Mammary epithelial cell (primary cell): ENCODE measurements at regions of chr6 and their contacts with region 1.

Region 1: GRCh38 chr6:122869437-122870024 is 80.5 kb downstream of the SMPDL3A start:
- DNase-seq: peak; percentile 49
- H3K4me3 ChIP-seq: no peak overlapping the region
- H3K27ac ChIP-seq: no peak overlapping the region
- H3K4me1 ChIP-seq: no peaks in the 10 kb centered on the region
- H3K27me3 ChIP-seq: no peaks in the 10 kb centered on the region
- CTCF ChIP-seq: peak; percentile 86 to 88

Region 2: DNA sequence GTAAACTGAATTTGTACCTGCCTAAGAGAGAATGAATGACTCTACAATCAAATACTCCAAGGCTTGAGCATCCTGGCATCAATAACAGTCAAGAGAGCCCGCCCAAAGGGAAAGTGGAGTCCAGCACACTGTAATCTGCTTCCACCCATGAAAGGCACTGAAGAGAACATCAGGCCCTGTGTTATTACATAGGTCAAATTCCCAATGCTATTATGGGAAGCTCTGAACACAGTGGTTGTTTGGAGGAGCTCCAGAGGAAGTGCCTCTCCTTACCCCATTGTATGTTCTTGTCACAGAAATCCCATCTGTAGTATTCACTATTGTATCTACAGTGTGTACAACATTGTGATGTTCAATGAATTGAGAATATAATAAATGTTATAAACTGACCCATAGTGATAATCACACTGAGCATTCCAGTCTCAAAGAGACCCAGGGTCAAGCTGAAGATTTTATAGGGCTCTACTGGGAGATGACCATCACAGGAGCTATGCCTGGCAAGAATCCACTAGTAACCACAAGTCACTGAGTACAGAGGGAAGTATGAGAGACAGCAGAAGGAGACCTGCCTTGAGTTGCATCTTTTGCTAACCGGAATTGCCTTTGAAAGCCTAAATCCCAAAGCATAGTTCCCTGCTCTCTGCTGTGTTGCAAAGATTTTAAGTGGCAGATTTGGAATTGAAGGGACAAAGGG is 987.4 kb before region 1 on chr6:
- CTCF ChIA-PET with region 1: no interaction called
- dilution Hi-C with region 1: no loop called
- in situ Hi-C with region 1: no loop called
- intact Hi-C with region 1: no loop called
- DNase-seq: peak; percentile 46
- H3K4me3 ChIP-seq: no peak overlapping the region
- H3K27ac ChIP-seq: no peak overlapping the region
- H3K4me1 ChIP-seq: peaks cover 4% of the 10 kb centered on the region
- H3K27me3 ChIP-seq: no peaks in the 10 kb centered on the region
- CTCF ChIP-seq: no peak

Region 3: GRCh38 chr6:122947355-122947754 is 77.8 kb after region 1 on chr6:
- CTCF ChIA-PET with region 1: interaction called, 6 read pairs
- dilution Hi-C with region 1: no loop called
- in situ Hi-C with region 1: no loop called
- intact Hi-C with region 1: loop called (anchors 1 kb)
- DNase-seq: peak; percentile 7
- H3K4me3 ChIP-seq: no peak overlapping the region
- H3K27ac ChIP-seq: no peak overlapping the region
- H3K4me1 ChIP-seq: no peaks in the 10 kb centered on the region
- H3K27me3 ChIP-seq: no peaks in the 10 kb centered on the region
- CTCF ChIP-seq: peak; percentile 45 to 75

Region 4: GRCh38 chr6:122969999-122970533 is 100.5 kb after region 1 on chr6:
- CTCF ChIA-PET with region 1: no interaction called
- dilution Hi-C with region 1: no loop called
- in situ Hi-C with region 1: no loop called
- intact Hi-C with region 1: no loop called
- DNase-seq: no peak
- H3K4me3 ChIP-seq: no peak overlapping the region
- H3K27ac ChIP-seq: no peak overlapping the region
- H3K4me1 ChIP-seq: no peaks in the 10 kb centered on the region
- H3K27me3 ChIP-seq: no peaks in the 10 kb centered on the region
- CTCF ChIP-seq: no peak

Region 5: DNA sequence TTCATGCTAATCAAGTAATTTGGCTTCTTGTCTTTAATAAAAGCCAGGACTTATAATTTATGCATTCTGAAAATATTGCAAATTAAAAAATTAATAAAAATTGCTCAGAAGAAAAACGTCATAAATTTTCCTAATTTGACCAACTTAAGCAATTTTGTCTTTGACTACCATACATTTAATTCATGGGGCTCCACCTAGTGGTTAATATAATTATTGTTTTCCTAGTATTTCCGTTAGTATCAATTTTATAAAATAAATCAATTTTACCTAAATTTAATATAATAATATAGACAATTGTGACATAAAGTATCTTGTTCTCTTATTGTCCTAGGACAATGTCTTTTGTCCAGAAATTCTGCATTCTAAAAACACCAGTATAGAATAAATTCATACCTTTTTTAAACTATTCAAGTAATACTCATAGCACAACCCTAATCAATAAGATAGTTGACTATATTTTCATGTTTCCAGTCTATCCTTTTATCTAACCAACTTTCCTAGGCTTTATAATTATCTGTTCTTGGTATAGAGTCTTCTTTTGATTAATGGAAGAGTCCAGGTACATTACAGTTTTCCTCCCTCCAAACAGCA is 447.3 kb after region 1 on chr6:
- CTCF ChIA-PET with region 1: no interaction called
- dilution Hi-C with region 1: loop called (anchors 25 kb)
- in situ Hi-C with region 1: loop called (anchors 10 to 25 kb)
- intact Hi-C with region 1: loop called (anchors 1 kb)
- DNase-seq: no peak
- H3K4me3 ChIP-seq: no peak overlapping the region
- H3K27ac ChIP-seq: no peak overlapping the region
- H3K4me1 ChIP-seq: no peaks in the 10 kb centered on the region
- H3K27me3 ChIP-seq: no peaks in the 10 kb centered on the region
- CTCF ChIP-seq: peak; percentile 35 to 45

Region 6: DNA sequence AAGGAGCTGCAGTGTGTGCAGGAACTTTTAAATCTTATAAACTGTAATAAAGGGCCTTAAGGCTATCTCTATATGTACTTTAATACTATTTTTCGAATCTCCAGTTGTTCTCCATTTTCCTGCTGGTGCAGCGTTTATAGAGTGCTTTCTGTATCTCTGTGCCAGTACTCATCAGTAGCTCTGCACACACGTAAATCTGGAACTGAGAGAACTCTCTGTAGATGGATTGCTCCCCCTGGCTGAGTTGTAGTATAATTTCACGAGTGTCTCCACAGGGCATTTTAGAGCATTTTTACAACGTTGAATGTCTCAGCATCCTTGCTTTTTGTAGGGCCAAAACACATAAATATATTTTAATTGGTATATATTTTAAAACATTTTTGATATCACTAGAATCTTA is 510.7 kb after region 1 on chr6:
- CTCF ChIA-PET with region 1: interaction called, 7 read pairs
- dilution Hi-C with region 1: no loop called
- in situ Hi-C with region 1: no loop called
- intact Hi-C with region 1: loop called (anchors 1 kb)
- DNase-seq: peak; percentile 14
- H3K4me3 ChIP-seq: no peak overlapping the region
- H3K27ac ChIP-seq: no peak overlapping the region
- H3K4me1 ChIP-seq: no peaks in the 10 kb centered on the region
- H3K27me3 ChIP-seq: peaks cover 4% of the 10 kb centered on the region
- CTCF ChIP-seq: peak; percentile 24 to 43

Region 7: DNA sequence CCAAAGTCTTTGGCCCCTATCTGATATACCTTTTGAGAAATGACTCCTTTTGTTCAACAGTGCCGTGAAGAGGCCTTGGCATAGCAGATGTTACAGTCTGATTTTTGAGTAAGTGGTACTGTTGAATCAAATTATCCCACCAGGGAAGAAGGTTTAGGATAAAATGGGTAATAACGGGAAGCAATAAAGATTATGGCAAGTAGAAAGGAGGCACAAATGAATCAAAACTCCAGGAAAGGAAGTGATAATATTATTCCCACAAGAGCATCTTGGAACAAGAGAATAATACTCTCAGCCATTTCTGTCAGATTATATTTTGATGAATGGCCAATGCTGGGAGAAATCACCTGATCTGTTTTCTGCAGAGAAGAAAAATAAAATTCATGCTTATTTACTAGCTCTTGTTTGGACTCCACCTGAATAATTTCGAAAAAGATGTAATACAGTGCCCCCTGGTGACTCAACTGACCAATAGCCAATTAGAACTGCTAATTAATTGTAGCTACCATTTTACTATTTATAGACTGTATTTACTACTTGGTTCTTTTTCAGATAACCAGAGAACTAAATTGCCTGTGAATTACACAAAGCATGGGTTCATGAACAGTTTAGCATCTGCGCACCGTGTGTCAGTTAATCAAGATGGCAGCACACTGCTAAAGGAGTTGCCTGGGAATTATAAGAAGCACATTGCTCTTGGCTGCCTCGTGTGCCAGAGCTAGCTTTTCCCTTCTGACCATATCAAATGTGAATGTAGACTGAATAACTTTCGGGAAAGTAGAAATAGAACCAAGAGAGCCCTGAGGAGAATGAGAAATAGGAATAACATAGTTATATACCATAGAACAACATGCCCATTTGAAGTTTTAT is 845.7 kb after region 1 on chr6:
- CTCF ChIA-PET with region 1: interaction called, 5 read pairs
- dilution Hi-C with region 1: no loop called
- in situ Hi-C with region 1: no loop called
- intact Hi-C with region 1: loop called (anchors 2 kb)
- DNase-seq: peak; percentile 5
- H3K4me3 ChIP-seq: no peak overlapping the region
- H3K27ac ChIP-seq: no peak overlapping the region
- H3K4me1 ChIP-seq: no peaks in the 10 kb centered on the region
- H3K27me3 ChIP-seq: no peaks in the 10 kb centered on the region
- CTCF ChIP-seq: peak; percentile 54 to 58